Activated CD4-positive, alpha-beta T cell treated with anti-CD3 and anti-CD28 coated beads for 36 hours (primary cell): ENCODE measurements at regions of chr11 and their contacts with region 1.

Region 1: GRCh38 chr11:12174477-12175143 is 64.2 kb downstream of the MICAL2 start:
- DNase-seq: no peak
- ATAC-seq: peak; percentile 59
- H3K4me3 Mint-ChIP-seq: peak overlapping the region; percentile 47
- H3K27ac Mint-ChIP-seq: peak overlapping the region; percentile 94
- H3K4me1 Mint-ChIP-seq: peaks cover 69% of the 10 kb centered on the region
- H3K27me3 Mint-ChIP-seq: no peaks in the 10 kb centered on the region

Region 2: DNA sequence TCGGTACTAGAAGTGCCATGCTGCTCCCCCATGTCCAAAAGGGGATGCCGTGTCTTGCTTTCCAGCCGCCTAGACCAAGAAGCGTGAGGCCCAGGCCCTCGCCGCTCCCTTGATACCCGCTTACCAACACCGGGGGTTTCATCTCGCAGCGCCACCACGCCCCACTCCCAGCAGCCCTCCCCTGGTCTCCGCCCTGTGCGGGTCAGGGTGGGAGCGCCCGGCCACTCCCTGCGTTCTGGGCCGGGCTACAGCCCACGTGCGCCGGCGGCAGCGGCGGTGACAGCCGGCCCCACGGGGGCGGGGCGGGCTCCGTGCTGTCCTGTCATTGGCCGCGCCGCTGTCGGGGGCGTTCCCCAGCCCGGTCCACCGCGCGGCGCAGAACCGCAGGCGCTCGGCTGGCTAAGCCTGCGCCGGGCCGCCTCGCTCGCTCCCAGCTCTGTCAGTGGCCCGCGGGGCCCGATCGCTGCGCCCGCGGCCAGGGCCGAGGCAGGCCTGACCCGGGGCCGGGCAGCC is 64.4 kb before region 1 on chr11 and contains the start of gene MICAL2:
- CTCF ChIA-PET with region 1: no interaction called
- POLR2A ChIA-PET with region 1: no interaction called
- intact Hi-C with region 1: loop called in 1 of 2 experiments (anchors 1 kb)
- DNase-seq: peak; percentile 92
- ATAC-seq: peak; percentile 88
- H3K4me3 Mint-ChIP-seq: peak within 1 kb of the TSS; percentile 75
- H3K27ac Mint-ChIP-seq: peak within 1 kb of the TSS; percentile 90
- H3K4me1 Mint-ChIP-seq: peaks cover 41% of the 10 kb centered on the region
- H3K27me3 Mint-ChIP-seq: no peaks in the 10 kb centered on the region
- total RNA-seq, gene MICAL2: 186 to 207 TPM

Region 3: DNA sequence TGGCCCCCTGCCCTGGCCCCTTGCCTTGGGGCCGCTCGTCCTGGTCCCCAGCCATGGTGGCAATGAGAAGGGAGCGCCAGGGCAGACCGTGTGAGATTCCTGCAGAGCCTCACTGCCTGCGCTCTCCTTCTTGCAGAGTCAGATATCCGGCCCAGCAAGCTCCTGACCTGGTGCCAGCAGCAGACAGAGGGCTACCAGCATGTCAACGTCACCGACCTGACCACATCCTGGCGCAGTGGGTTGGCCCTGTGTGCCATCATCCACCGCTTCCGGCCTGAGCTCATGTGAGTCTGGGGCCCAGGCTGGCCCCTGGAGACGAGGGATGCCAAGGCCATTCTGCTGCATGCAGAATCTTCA is 49.9 kb after region 1 on chr11:
- CTCF ChIA-PET with region 1: interaction called, 3 read pairs
- POLR2A ChIA-PET with region 1: no interaction called
- intact Hi-C with region 1: loop called (anchors 1 kb)
- DNase-seq: peak; percentile 96
- ATAC-seq: peak; percentile 97
- H3K4me3 Mint-ChIP-seq: peak overlapping the region; percentile 74
- H3K27ac Mint-ChIP-seq: peak overlapping the region; percentile 93
- H3K4me1 Mint-ChIP-seq: peaks cover 48% of the 10 kb centered on the region
- H3K27me3 Mint-ChIP-seq: no peaks in the 10 kb centered on the region